Activated CD8-positive, alpha-beta memory T cell treated with anti-CD3 and anti-CD28 coated beads, Interleukin-2, amount 10 ng/mL, durations not matched to agents 7 days and 5 days (primary cell): ENCODE measurements at regions of chr22 and their contacts with region 1.

Region 1: DNA sequence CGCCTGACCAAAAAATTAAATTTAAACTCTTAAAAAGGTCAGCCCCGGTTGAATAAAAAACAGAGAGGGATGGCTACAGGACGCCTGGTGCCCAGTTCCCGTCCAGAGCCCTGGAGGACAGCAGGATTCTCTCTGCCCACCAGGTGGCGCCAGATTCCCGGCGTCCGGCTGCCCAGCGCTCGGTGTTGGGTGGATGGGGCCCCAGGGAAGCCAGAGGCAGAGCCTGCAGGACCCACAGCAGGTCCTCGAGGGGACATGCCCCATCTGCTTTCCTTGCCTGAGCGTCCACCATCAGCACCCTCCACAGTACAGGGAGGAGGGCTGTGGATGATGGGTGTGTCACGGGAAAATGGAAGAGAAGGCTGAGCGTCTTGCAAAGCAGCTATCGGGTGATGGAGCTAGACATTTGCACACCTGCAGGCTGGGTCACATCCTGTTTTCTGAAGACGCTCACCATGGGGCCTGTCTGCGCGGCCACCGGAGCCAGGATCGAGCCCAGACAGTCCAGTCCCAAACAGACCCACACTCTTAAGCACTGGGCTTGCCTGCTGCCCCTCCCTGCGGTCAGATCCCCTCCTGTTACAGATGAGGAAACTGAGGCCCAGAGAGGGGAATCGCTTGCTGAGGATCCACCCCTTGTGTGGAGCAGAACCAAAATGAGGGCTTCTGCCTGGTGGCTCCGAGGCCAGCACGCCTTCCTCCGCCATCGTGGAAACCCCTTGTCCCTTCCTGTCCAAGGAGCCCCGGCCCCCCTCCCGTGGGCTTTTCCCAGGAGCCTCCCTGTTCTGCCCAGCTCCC is 18.5 kb upstream of the CBX7 start:
- DNase-seq: peak; percentile 87
- ATAC-seq: peak; percentile 82
- H3K4me3 Mint-ChIP-seq: peak overlapping the region; percentile 36
- H3K27ac Mint-ChIP-seq: peak overlapping the region; percentile 70
- H3K4me1 Mint-ChIP-seq: peaks cover 36% of the 10 kb centered on the region
- H3K27me3 Mint-ChIP-seq: peaks cover 23% of the 10 kb centered on the region

Region 2: GRCh38 chr22:39152511-39153219 is 18.4 kb before region 1 on chr22 and contains the start of gene CBX7:
- CTCF ChIA-PET with region 1: interaction called, 28 read pairs
- DNase-seq: peak; percentile 92
- ATAC-seq: peak; percentile 93
- H3K4me3 Mint-ChIP-seq: peak within 1 kb of the TSS; percentile 60
- H3K27ac Mint-ChIP-seq: peak within 1 kb of the TSS; percentile 56
- H3K4me1 Mint-ChIP-seq: peaks cover 36% of the 10 kb centered on the region
- H3K27me3 Mint-ChIP-seq: peaks cover 34% of the 10 kb centered on the region
- total RNA-seq, gene CBX7: 12.7 to 13.5 TPM

Region 3: DNA sequence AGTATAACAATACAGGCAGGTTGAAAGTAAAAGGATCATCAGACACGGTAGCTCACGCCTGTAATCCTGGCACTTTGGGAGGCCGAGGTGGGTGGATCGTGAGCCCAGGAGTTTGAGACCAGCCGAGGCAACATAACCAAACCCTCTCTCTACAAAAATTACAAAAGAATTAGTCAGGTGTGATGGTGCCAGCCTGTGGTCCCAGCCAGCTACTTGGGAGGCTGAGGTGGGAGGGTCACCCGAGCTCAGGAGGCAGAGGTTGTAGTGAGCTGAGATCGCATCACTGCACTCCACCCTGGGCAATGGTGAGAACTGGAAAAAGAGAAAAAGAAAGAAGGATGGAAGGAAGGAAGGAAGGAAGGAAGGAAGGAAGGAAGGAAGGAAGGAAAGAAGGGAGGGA is 24.4 kb after region 1 on chr22:
- CTCF ChIA-PET with region 1: no interaction called
- DNase-seq: no peak
- ATAC-seq: no peak
- H3K4me3 Mint-ChIP-seq: no peak overlapping the region
- H3K27ac Mint-ChIP-seq: no peak overlapping the region
- H3K4me1 Mint-ChIP-seq: no peaks in the 10 kb centered on the region
- H3K27me3 Mint-ChIP-seq: peaks cover 48% of the 10 kb centered on the region

Region 4: GRCh38 chr22:39306581-39307361 is 135.7 kb after region 1 on chr22:
- CTCF ChIA-PET with region 1: interaction called, 254 read pairs
- DNase-seq: peak; percentile 68
- ATAC-seq: peak; percentile 27
- H3K4me3 Mint-ChIP-seq: no peak overlapping the region
- H3K27ac Mint-ChIP-seq: no peak overlapping the region
- H3K4me1 Mint-ChIP-seq: peaks cover 11% of the 10 kb centered on the region
- H3K27me3 Mint-ChIP-seq: peaks cover 4% of the 10 kb centered on the region